Left ventricle myocardium superior (tissue), 1 donor: ENCODE measurements at regions of chr17 and their contacts with region 1.

Region 1: DNA sequence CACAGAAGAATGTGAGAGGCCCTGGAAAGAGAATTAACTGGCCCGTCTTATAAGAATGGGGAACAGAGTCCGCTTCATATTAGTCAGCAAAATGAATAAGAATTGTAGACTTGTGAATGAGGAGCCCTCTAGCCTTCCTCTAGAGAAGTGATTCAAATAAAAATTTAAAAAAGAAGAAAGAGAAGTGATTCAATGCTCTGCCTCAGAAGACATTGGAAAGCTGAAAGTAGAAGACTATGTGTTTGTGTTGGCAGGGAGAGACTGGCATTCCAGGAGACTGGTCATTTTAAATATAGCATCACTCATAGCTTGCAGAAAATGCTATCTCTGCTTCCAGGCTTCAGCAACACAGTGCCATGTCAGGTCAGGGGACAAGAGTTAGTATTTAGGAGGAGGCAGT is 190.6 kb upstream of the HS3ST3A1 start:
- DNase-seq: no peak
- ATAC-seq: peak; percentile 97

Region 2: GRCh38 chr17:13647543-13648021 is 144.7 kb before region 1 on chr17:
- intact Hi-C with region 1: loop called (anchors 10 kb)
- DNase-seq: no peak
- ATAC-seq: no peak

Region 3: GRCh38 chr17:13925579-13925978 is 133.3 kb after region 1 on chr17:
- intact Hi-C with region 1: no loop called
- DNase-seq: no peak
- ATAC-seq: no peak